Calu3 (cell line): ENCODE measurements at regions of chr10 and their contacts with region 1.

Region 1: DNA sequence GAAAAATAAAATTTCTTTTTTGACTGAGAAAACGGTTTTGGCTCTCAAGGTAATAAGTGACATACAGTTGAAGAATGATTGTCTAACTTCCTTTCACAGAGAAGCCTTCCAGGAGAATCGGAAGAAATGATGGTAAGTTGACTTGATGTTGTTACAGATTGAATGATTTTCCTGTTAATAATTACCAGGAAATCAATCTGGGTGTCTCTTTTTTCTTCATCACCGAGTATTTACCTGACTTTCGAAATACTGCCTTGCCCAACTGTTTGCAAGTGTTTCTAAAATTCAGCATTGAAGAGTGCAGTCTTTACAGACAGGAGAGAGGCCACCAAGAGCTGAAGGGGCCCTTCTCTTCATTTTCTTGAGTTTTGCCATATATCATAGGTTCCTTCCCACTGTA is 4.0 kb downstream of the ITIH2 start:
- DNase-seq: peak; percentile 40
- H3K4me3 Mint-ChIP-seq: peak overlapping the region; percentile 28
- H3K27ac Mint-ChIP-seq: peak overlapping the region; percentile 79
- H3K4me1 Mint-ChIP-seq: peaks cover 47% of the 10 kb centered on the region
- H3K27me3 Mint-ChIP-seq: no peaks in the 10 kb centered on the region
- CTCF ChIP-seq: no peak

Region 2: GRCh38 chr10:7744307-7744706 is 37.2 kb after region 1 on chr10:
- CTCF ChIA-PET with region 1: no interaction called
- intact Hi-C with region 1: no loop called
- DNase-seq: no peak
- H3K4me3 Mint-ChIP-seq: no peak overlapping the region
- H3K27ac Mint-ChIP-seq: no peak overlapping the region
- H3K4me1 Mint-ChIP-seq: no peaks in the 10 kb centered on the region
- H3K27me3 Mint-ChIP-seq: no peaks in the 10 kb centered on the region
- CTCF ChIP-seq: no peak

Region 3: DNA sequence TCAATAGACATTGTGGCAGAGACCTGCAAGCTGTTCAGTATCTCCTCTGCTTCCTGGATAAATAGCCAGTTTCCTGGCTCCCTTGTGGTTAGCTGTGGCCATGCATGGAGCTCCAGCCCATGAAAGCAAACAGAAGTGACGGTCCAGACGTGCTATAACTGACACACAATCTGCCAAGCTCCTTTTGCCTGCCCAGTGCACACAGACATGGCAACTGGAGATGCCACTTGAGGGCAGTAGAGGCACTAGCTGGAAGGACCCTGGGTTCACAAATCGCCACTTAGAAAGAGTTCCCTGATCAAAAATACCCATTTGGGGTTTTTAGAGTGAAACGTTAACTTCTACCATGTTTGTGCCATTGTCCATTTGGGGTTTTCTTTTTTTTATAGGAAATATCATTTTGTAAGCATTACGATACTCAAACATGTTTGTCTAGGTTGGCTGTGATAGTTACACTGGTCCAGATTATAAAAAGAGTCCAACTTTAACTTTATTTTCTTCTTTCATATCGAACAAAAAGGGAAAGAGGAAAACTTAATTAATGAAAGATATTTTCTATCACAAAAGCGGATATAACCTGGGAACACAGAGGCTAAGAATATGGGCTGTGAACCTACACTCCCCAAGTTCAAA is 49.4 kb after region 1 on chr10:
- CTCF ChIA-PET with region 1: interaction called, 6 read pairs
- intact Hi-C with region 1: loop called (anchors 2 kb)
- DNase-seq: peak; percentile 47
- H3K4me3 Mint-ChIP-seq: no peak overlapping the region
- H3K27ac Mint-ChIP-seq: no peak overlapping the region
- H3K4me1 Mint-ChIP-seq: no peaks in the 10 kb centered on the region
- H3K27me3 Mint-ChIP-seq: no peaks in the 10 kb centered on the region
- CTCF ChIP-seq: peak; percentile 48